ENCODE measurements at regions of chr21 and their contacts with region 1.

Region 1: DNA sequence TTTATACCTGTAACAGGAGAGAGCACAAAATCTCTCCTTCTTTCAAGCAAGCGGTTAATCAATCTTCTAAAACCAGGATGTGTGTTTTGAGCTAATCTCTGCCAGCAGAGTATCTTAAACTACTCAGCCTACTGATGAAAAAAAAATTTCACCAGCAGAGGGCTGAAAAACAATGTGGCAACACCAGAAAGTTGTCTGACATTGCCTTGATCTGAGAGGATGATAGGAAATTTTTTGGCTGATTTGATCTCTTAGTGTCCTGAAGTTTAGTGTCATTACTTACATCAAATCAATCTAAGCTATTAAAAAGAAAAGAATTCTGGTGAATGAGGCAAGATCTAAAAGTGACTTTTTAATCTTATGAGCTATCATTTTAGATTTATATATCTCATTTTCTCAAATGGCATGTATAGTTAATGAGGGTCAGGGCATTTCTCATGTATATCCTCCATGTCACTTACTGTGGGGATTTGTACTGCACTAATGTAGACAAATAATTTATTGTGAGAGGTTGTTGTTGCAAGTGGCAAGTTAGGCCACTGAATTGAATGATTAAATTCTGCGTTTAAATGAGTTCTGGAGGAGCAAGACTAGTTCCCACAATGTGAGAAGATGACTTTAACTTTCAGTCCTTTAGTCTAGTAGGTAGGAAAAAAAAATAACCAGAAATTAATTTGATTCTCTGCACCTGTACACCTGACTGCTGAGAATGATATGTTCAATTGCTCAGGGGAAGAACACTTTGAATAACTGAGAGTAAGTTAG is 10.8 kb downstream of the ADAMTS1 start:
- DNase-seq: no peak
- H3K4me3 ChIP-seq: no peak overlapping the region
- H3K27ac ChIP-seq: no peak overlapping the region
- H3K4me1 ChIP-seq: peaks cover 17 to 30% (median 24%) of the 10 kb centered on the region in 4 donors
- H3K27me3 ChIP-seq: no peaks in the 10 kb centered on the region
- CTCF ChIP-seq: peak; percentile 16 to 34 (median 20)
- EP300 ChIP-seq: no peak
- POLR2A ChIP-seq: no peak

Region 2: DNA sequence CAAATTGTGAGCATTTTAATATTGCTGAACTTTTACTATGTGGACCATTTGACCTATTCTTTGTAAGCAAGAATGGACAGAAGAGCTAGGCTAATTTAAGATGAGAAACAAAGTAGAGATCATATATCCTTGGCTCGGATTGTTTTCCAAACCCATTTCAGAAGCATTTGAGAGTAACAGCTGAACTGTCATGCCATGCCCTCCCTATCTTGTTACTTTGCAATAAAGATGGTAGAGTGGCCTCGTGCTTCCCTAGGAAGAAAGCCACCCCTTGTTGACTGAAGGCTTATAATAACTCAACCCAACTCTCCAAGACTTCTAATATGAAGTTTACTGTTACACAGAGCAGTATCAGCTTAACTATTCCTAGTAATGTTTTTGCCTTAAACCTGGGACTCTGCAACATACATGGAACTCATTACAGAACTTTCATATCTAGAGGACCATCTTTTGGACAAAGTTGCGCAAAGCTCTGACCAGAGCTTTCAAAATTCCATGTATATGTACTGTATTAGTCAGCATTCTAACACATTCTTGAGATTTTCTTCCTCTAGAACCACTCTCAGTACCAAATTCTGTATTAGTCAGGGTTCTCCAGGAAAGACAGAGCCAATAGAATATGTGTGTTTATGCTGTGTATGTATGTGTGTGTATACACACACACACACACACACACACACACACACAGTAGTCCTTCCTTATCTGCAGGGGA is 57.9 kb before region 1 on chr21:
- intact Hi-C with region 1: loop called (anchors 5 kb)
- DNase-seq: no peak
- H3K4me3 ChIP-seq: no peak overlapping the region
- H3K27ac ChIP-seq: no peak overlapping the region
- H3K4me1 ChIP-seq: peaks cover 0 to 1% (median under 1%) of the 10 kb centered on the region in 4 donors
- H3K27me3 ChIP-seq: no peaks in the 10 kb centered on the region
- CTCF ChIP-seq: no peak
- EP300 ChIP-seq: no peak
- POLR2A ChIP-seq: no peak

Region 3: DNA sequence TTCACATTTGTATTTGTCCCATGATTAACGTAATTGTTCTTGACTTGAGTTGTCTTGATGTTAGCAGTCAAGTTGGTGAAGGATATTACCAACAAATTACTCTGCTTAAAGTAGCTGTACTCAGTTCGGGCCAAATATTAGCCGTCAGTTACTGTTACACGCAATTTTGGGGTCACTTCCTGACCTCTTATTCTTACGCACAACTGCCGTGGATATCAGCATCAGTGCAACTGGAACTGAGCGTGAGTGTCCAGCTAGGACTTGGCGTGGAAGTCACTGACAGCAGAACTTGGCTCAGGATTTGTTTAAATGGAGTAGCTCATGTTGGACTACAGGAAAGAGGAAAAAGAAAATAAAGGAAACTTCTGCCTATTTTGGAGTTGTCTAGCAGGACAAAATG is 45.6 kb before region 1 on chr21:
- intact Hi-C with region 1: no loop called
- DNase-seq: no peak
- H3K4me3 ChIP-seq: no peak overlapping the region
- H3K27ac ChIP-seq: peak overlapping the region; percentile 49 to 71 (median 64)
- H3K4me1 ChIP-seq: peaks cover 7 to 21% (median 11%) of the 10 kb centered on the region in 4 donors
- H3K27me3 ChIP-seq: no peaks in the 10 kb centered on the region
- CTCF ChIP-seq: no peak
- EP300 ChIP-seq: no peak
- POLR2A ChIP-seq: no peak

Region 4: GRCh38 chr21:27077501-27077900 is 243.1 kb after region 1 on chr21:
- intact Hi-C with region 1: no loop called
- DNase-seq: no peak
- H3K4me3 ChIP-seq: no peak overlapping the region
- H3K27ac ChIP-seq: no peak overlapping the region
- H3K4me1 ChIP-seq: no peaks in the 10 kb centered on the region
- H3K27me3 ChIP-seq: no peaks in the 10 kb centered on the region
- CTCF ChIP-seq: no peak
- EP300 ChIP-seq: no peak
- POLR2A ChIP-seq: no peak